Esophagus muscularis mucosa (tissue), 4 donors: ENCODE measurements at regions of chr4 and their contacts with region 1.

Region 1: GRCh38 chr4:77819843-77820648 is 878 bp upstream of the CNOT6L start:
- DNase-seq: peak; percentile 96
- H3K4me3 ChIP-seq: peak overlapping the region; percentile 89 to 96 (median 96)
- H3K27ac ChIP-seq: peak overlapping the region; percentile 98 to 100 (median 100)
- H3K4me1 ChIP-seq: peaks cover 31 to 43% (median 39%) of the 10 kb centered on the region in 4 donors
- H3K27me3 ChIP-seq: no peaks in the 10 kb centered on the region
- CTCF ChIP-seq: no peak
- EP300 ChIP-seq: no peak
- POLR2A ChIP-seq: peak; percentile 63

Region 2: DNA sequence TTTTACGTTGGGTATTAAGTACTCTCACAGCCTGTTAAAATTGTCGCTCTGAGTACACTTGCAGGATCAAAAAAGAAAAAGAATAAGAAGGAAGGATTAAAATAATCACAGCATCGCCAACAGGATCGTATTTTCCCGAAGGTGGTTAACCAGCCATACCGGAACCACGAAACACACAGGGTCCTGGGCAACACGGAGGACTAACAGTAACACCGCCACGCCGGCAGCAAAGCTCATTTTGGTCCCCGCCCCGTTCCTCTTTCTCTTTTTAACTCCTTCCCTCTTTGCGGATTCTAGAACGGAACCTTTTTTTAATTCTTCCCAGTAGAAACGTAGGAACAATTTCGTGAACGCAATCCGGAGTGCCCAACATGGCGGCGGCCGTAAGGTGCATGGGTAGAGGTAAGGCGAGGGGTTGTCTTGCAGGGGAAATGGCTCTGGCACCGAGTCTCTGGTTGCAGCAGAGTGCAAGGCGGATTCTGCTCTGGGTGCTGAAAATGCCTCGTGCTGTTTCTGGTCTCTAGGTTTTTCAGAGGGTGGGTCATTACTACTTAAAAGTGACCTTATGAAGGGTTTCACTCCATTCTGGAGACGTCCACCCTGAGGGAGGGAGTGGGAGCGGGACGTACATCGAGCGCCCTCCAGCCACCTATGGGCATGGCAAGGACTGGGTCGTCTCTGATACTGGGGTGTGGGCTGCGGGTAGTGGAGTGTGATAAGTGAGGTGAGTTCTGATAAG is 42.6 kb after region 1 on chr4 and contains the start of gene MRPL1:
- intact Hi-C with region 1: loop called (anchors 2 kb)
- DNase-seq: peak; percentile 97
- H3K4me3 ChIP-seq: peak within 1 kb of the TSS; percentile 53 to 78 (median 74)
- H3K27ac ChIP-seq: peak within 1 kb of the TSS; percentile 86 to 91 (median 88)
- H3K4me1 ChIP-seq: peaks cover 8 to 26% (median 14%) of the 10 kb centered on the region in 4 donors
- H3K27me3 ChIP-seq: no peaks in the 10 kb centered on the region
- CTCF ChIP-seq: no peak
- EP300 ChIP-seq: no peak
- POLR2A ChIP-seq: no peak
- total RNA-seq, gene MRPL1: 16.6 to 28.2 (median 19.5) TPM